Naive thymus-derived CD4-positive, alpha-beta T cell (primary cell): ENCODE measurements at regions of chr7 and their contacts with region 1.

Region 1: DNA sequence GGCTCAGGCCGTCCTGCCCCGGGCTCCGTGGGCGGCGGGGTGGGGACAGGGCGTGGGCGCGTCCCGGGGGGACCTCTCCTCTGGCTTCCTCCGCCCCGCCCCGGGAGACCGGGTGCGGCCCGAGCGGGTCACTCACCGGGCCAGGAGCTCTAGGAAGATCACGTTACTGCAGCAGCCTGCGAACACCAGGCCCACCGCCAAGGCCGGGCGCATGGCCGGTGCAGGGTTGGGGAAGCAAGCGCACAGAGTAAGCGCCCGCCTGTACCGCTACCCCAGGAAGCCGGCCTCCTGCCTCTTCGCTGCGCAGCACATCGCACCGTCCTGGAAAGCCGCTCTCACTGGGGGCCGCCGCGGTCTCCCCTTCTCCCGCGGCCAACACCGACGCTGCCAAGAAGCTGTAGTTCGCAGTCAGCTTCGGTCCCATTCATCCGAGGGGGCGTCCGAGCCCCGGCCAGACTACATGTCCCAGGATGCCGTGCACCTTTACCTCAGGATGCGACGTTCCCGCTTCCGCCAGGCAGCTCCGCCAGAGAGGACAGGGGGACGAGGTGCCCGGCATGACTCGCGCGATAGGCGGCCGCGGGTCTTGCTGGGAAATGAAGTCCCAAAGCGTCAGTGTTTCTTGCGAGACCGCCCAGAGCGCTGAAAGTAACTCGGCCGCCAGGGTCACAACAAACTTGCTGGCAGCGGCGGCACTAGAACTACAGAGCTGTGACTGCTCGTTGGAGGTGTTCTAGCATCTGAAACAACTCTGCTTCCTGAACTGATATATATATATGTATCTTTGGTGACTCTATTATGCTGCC is at the start of gene SLC35B4:
- DNase-seq: peak; percentile 79 to 95 (median 92)
- ATAC-seq: peak; percentile 99
- H3K4me3 ChIP-seq: peak within 1 kb of the TSS; percentile 79
- H3K4me3 Mint-ChIP-seq: peak within 1 kb of the TSS; percentile 88 to 97 (median 94)
- H3K27ac ChIP-seq: peak within 1 kb of the TSS; percentile 77
- H3K27ac Mint-ChIP-seq: peak within 1 kb of the TSS; percentile 81 to 93 (median 89)
- H3K4me1 ChIP-seq: peaks cover 0 to 15% of the 10 kb centered on the region in 2 donors
- H3K4me1 Mint-ChIP-seq: peaks cover 18 to 29% (median 26%) of the 10 kb centered on the region in 7 donors
- H3K27me3 ChIP-seq: no peaks in the 10 kb centered on the region
- H3K27me3 Mint-ChIP-seq: peaks cover 0 to 4% (median 0%) of the 10 kb centered on the region in 5 donors
- total RNA-seq, gene SLC35B4: 9.8 to 19.2 (median 12.2) TPM

Region 2: GRCh38 chr7:133081599-133082389 is 1234.9 kb before region 1 on chr7 and contains the start of gene CHCHD3:
- CTCF ChIA-PET with region 1: no interaction called
- POLR2A ChIA-PET with region 1: no interaction called
- intact Hi-C with region 1: loop called (anchors 1 kb)
- DNase-seq: peak; percentile 83 to 97 (median 95)
- ATAC-seq: peak; percentile 99
- H3K4me3 ChIP-seq: peak within 1 kb of the TSS; percentile 94
- H3K4me3 Mint-ChIP-seq: peak within 1 kb of the TSS; percentile 87 to 95 (median 92)
- H3K27ac ChIP-seq: peak within 1 kb of the TSS; percentile 93
- H3K27ac Mint-ChIP-seq: peak within 1 kb of the TSS; percentile 52 to 96 (median 93)
- H3K4me1 ChIP-seq: peaks cover 14 to 17% of the 10 kb centered on the region in 2 donors
- H3K4me1 Mint-ChIP-seq: peaks cover 13 to 44% (median 34%) of the 10 kb centered on the region in 7 donors
- H3K27me3 ChIP-seq: no peaks in the 10 kb centered on the region
- H3K27me3 Mint-ChIP-seq: peaks cover 0 to 7% (median 0%) of the 10 kb centered on the region in 5 donors
- total RNA-seq, gene CHCHD3: 25.6 to 44.6 (median 31.2) TPM

Region 3: GRCh38 chr7:134126966-134127848 is 189.5 kb before region 1 on chr7 and contains the start of gene LRGUK:
- CTCF ChIA-PET with region 1: no interaction called
- POLR2A ChIA-PET with region 1: no interaction called
- intact Hi-C with region 1: loop called (anchors 1 kb)
- DNase-seq: peak; percentile 55 to 82 (median 77)
- ATAC-seq: peak; percentile 100
- H3K4me3 ChIP-seq: peak within 1 kb of the TSS; percentile 93
- H3K4me3 Mint-ChIP-seq: peak within 1 kb of the TSS; percentile 80 to 96 (median 88)
- H3K27ac ChIP-seq: no peak within 1 kb of the TSS
- H3K27ac Mint-ChIP-seq: peak within 1 kb of the TSS in 3 of 9 donors; percentile 16 to 65 (median 46)
- H3K4me1 ChIP-seq: peaks cover 3 to 9% of the 10 kb centered on the region in 2 donors
- H3K4me1 Mint-ChIP-seq: peaks cover 15 to 26% (median 18%) of the 10 kb centered on the region in 7 donors
- H3K27me3 ChIP-seq: no peaks in the 10 kb centered on the region
- H3K27me3 Mint-ChIP-seq: peaks cover 20 to 44% (median 23%) of the 10 kb centered on the region in 5 donors
- total RNA-seq, gene LRGUK: 0.22 to 1.0 (median 0.43) TPM

Region 4: DNA sequence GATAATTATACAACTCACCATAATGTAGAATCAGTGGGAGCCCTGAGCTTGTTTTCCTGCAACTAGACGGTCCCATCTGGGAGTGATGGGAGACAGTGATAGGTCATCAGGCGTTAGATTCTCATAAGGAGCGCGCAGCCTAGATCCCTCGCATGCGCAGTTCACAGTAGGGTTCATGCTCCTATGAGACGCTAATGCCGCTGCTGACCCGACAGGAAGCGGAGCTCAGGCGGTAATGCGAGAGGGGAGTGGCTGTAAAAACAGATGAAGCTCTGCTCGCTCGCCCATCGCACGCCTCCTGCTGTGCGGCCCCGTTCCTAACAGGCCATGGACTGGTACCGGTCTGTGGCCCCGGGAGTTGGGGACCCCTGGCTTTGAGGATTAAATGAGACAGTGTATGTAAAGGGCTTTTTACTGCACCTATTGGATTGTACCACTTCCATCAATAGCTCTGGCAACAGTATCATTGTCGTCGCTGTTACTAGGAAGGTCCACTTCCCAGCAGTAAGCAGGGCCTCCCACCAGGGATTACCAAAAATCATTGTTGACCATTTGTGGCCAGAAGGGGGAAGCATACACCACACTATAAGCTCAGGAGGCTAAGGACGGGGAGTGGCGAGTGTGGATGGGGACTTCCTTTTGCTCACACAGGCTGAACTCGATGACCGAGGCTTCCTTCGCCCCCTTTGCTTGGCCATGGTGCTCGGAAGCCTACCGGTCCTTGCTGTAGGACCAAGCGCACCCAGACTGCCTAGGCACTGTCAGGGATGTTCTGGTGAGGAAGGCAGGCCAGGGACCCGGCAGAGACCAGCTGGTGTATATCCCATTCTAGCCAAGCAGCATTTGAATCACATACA is 115.8 kb after region 1 on chr7:
- CTCF ChIA-PET with region 1: interaction called, 5 read pairs
- POLR2A ChIA-PET with region 1: interaction called, 5 read pairs
- intact Hi-C with region 1: loop called (anchors 2 to 5 kb)
- DNase-seq: peak; percentile 39 to 74 (median 67)
- ATAC-seq: peak; percentile 94
- H3K4me3 ChIP-seq: peak overlapping the region; percentile 59
- H3K4me3 Mint-ChIP-seq: peak overlapping the region; percentile 79 to 91 (median 86)
- H3K27ac ChIP-seq: peak overlapping the region; percentile 37
- H3K27ac Mint-ChIP-seq: peak overlapping the region; percentile 71 to 93 (median 90)
- H3K4me1 ChIP-seq: peaks cover 4 to 14% of the 10 kb centered on the region in 2 donors
- H3K4me1 Mint-ChIP-seq: peaks cover 12 to 17% (median 15%) of the 10 kb centered on the region in 7 donors
- H3K27me3 ChIP-seq: no peaks in the 10 kb centered on the region
- H3K27me3 Mint-ChIP-seq: peaks cover 0 to 16% (median 0%) of the 10 kb centered on the region in 5 donors

Region 5: DNA sequence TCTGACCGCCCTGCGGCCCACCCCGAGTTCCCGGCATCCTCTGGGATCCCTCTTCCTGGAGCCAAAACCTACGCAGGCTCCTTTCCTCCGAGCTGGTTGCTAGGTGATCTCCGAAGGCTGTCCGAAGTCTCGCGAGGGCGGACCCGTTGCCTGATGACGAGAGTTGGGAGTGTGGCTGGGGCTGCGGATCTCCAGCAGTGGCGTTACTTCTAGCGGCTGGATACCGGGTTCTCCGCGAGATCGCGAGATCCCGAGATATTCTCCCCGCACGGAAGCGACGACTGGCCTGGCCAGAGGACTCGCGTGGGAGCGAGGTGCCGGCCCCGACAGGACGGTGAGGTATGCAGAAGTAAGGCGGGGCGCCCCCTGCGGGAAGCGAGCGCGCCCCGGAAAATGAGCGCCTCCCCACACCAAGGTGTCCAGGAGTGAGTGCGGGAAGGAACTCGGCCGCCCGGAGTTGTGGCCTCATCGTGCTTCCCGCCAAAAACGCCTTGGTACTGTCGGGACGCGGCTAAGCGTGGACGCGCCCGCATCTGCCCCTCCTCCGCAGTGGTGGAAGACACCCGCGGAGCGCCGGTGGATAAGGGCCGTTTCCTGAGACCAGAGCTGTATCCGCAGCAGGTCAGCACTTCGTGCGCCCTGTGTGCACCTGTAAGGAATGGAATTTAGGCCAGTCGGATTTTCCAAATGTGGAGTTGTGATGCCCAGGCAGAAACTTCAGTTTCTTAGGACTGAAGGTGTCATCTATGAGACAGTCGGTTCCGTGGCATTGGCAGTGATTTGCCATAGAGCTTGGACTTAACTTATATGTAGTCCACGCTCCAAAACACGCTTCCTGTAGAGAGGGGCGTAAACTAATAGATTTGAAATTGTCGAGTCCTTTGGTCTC is 669.9 kb after region 1 on chr7 and contains the start of gene AGBL3:
- CTCF ChIA-PET with region 1: no interaction called
- POLR2A ChIA-PET with region 1: no interaction called
- intact Hi-C with region 1: loop called in 1 of 2 experiments (anchors 1 kb)
- DNase-seq: peak; percentile 80 to 92 (median 89)
- ATAC-seq: peak; percentile 94
- H3K4me3 ChIP-seq: peak within 1 kb of the TSS; percentile 92
- H3K4me3 Mint-ChIP-seq: peak within 1 kb of the TSS; percentile 93 to 100 (median 98)
- H3K27ac ChIP-seq: peak within 1 kb of the TSS; percentile 96
- H3K27ac Mint-ChIP-seq: peak within 1 kb of the TSS; percentile 97 to 100 (median 99)
- H3K4me1 ChIP-seq: no peaks in the 10 kb centered on the region
- H3K4me1 Mint-ChIP-seq: peaks cover 20 to 61% (median 52%) of the 10 kb centered on the region in 7 donors
- H3K27me3 ChIP-seq: no peaks in the 10 kb centered on the region
- H3K27me3 Mint-ChIP-seq: no peaks in the 10 kb centered on the region
- total RNA-seq, gene AGBL3: 2.1 to 6.6 (median 3.8) TPM

Region 6: DNA sequence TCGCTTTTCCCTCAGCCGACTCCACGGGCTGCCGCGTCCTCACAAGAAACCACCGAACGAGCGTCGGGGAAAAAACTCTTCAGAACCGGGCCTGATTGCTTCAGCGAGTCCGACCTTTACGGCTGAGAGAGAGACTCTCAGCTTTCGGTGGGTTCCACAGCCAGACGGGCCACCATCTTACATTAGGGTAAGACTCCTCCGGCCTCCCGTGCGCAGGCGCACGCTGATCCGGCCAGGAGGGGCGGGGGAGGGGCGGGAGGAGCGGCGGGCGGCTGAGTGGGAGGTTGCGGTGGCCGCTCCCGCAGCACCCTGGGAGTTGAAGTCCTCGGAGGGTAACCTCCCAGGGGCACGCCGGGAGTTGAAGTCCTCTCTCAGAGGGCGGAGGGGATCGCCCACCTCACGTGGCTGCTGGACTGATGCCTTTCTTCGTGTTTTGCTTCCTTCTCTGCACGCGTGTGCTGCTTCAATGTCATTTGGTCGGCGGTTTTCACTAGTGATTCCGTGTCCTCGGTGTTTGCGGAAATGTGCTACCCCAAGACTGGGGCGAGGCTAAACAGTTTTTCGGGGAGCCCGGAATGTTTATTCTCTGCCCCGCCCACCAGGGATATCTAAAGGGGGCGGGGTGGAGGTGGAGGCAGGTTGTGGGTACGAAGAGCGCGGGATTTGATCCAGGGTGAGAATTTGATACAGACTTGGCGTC is 1193.3 kb after region 1 on chr7 and contains the start of gene CNOT4:
- CTCF ChIA-PET with region 1: no interaction called
- POLR2A ChIA-PET with region 1: no interaction called
- intact Hi-C with region 1: loop called in 1 of 2 experiments (anchors 1 kb)
- DNase-seq: peak; percentile 82 to 97 (median 92)
- ATAC-seq: peak; percentile 96
- H3K4me3 ChIP-seq: peak within 1 kb of the TSS; percentile 78
- H3K4me3 Mint-ChIP-seq: no peak within 1 kb of the TSS
- H3K27ac ChIP-seq: peak within 1 kb of the TSS; percentile 97
- H3K27ac Mint-ChIP-seq: no peak within 1 kb of the TSS
- H3K4me1 ChIP-seq: peaks cover 12 to 15% of the 10 kb centered on the region in 2 donors
- H3K4me1 Mint-ChIP-seq: peaks cover 3 to 21% (median 14%) of the 10 kb centered on the region in 7 donors
- H3K27me3 ChIP-seq: no peaks in the 10 kb centered on the region
- H3K27me3 Mint-ChIP-seq: no peaks in the 10 kb centered on the region
- total RNA-seq, gene CNOT4: 28.7 to 39.4 (median 38.3) TPM

Region 7: DNA sequence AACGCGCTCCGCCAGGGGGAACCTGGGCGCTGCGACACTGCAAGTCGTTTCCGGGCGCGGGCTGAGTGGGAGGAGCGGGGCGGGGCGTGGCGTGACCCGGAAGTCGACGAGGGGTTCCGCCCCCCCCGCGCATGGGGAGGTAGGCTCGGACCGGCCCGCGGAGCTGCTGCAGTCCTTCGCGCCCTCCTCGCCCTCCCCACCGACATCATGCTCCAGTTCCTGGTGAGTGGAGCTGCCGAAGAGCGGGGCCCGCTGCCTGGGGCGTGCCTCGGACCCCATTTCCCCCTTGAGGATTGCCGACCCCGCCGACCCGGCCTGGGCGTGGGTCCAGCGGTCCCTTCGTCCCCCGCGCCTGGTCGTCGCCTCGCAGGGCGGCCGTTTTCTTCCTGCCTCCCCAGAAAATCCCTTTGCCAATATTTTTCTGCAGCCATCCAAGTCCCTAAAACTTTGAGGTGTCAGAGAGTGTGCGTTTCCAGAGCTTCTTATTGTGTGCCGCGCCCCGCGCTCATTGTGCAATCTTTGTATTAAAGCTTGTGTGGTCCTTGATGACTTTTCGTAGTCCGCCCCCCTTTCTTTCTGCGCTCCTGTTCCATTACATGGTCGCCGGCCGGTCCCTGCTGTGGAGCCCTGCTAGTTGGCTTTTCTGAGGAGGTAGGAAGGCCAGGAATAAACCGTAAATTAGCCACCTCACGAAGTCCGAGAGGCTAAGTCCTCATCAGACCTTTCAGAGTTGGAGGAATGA is 1345.8 kb after region 1 on chr7 and contains the start of gene STMP1:
- CTCF ChIA-PET with region 1: no interaction called
- POLR2A ChIA-PET with region 1: no interaction called
- intact Hi-C with region 1: loop called in 1 of 2 experiments (anchors 1 kb)
- DNase-seq: peak; percentile 89 to 97 (median 94)
- ATAC-seq: peak; percentile 99
- H3K4me3 ChIP-seq: peak within 1 kb of the TSS; percentile 91
- H3K4me3 Mint-ChIP-seq: peak within 1 kb of the TSS; percentile 86 to 98 (median 94)
- H3K27ac ChIP-seq: peak within 1 kb of the TSS; percentile 82
- H3K27ac Mint-ChIP-seq: peak within 1 kb of the TSS; percentile 80 to 95 (median 93)
- H3K4me1 ChIP-seq: peaks cover 6 to 15% of the 10 kb centered on the region in 2 donors
- H3K4me1 Mint-ChIP-seq: peaks cover 32 to 49% (median 43%) of the 10 kb centered on the region in 7 donors
- H3K27me3 ChIP-seq: no peaks in the 10 kb centered on the region
- H3K27me3 Mint-ChIP-seq: no peaks in the 10 kb centered on the region
- total RNA-seq, gene STMP1: 18.0 to 33.0 (median 24.7) TPM